ENCODE measurements at regions of chr6 and their contacts with region 1.

Region 1: GRCh38 chr6:129709769-129710449 is at the start of gene ARHGAP18:
- DNase-seq: peak; percentile 91 to 95
- ATAC-seq: peak; percentile 97 to 98 (median 98)
- H3K4me3 ChIP-seq: peak within 1 kb of the TSS; percentile 73
- H3K27ac ChIP-seq: peak within 1 kb of the TSS; percentile 85
- H3K4me1 ChIP-seq: peaks cover 25% of the 10 kb centered on the region
- H3K27me3 ChIP-seq: no peaks in the 10 kb centered on the region
- CTCF ChIP-seq: no peak
- total RNA-seq, gene ARHGAP18: 5.2 to 6.8 (median 5.5) TPM

Region 2: DNA sequence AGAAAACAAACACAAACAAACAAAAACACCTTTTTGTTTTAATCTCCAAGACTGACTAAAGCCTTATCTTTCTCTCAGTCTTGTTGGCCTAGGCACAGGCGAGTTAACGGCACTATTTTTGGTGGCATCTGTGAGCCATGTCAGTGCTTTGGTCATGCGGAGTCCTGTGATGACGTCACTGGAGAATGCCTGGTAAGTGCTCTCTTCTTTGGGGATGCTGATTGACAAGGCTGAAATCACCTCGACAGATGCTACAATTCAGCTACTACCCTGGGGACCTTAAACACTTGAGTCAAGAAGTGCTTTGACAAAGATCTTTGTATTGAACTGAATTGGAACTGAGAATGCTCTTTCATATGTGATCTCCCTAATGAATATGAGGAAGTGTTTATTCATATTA is 442.9 kb before region 1 on chr6:
- intact Hi-C with region 1: no loop called
- DNase-seq: no peak
- ATAC-seq: no peak
- H3K4me3 ChIP-seq: no peak overlapping the region
- H3K27ac ChIP-seq: no peak overlapping the region
- H3K4me1 ChIP-seq: no peaks in the 10 kb centered on the region
- H3K27me3 ChIP-seq: no peaks in the 10 kb centered on the region
- CTCF ChIP-seq: no peak

Region 3: GRCh38 chr6:129628101-129628815 is 81.7 kb before region 1 on chr6:
- intact Hi-C with region 1: loop called in 1 of 2 experiments (anchors 5 kb)
- DNase-seq: no peak
- ATAC-seq: peak in 1 of 4 donors; percentile 44
- H3K4me3 ChIP-seq: no peak overlapping the region
- H3K27ac ChIP-seq: no peak overlapping the region
- H3K4me1 ChIP-seq: peaks cover 20% of the 10 kb centered on the region
- H3K27me3 ChIP-seq: no peaks in the 10 kb centered on the region
- CTCF ChIP-seq: no peak

Region 4: GRCh38 chr6:129672881-129673643 is 36.8 kb before region 1 on chr6:
- intact Hi-C with region 1: loop called in 1 of 2 experiments (anchors 5 kb)
- DNase-seq: no peak
- ATAC-seq: peak in 2 of 4 donors; percentile 27 to 53
- H3K4me3 ChIP-seq: peak overlapping the region; percentile 17
- H3K27ac ChIP-seq: peak overlapping the region; percentile 58
- H3K4me1 ChIP-seq: peaks cover 48% of the 10 kb centered on the region
- H3K27me3 ChIP-seq: no peaks in the 10 kb centered on the region
- CTCF ChIP-seq: no peak

Region 5: DNA sequence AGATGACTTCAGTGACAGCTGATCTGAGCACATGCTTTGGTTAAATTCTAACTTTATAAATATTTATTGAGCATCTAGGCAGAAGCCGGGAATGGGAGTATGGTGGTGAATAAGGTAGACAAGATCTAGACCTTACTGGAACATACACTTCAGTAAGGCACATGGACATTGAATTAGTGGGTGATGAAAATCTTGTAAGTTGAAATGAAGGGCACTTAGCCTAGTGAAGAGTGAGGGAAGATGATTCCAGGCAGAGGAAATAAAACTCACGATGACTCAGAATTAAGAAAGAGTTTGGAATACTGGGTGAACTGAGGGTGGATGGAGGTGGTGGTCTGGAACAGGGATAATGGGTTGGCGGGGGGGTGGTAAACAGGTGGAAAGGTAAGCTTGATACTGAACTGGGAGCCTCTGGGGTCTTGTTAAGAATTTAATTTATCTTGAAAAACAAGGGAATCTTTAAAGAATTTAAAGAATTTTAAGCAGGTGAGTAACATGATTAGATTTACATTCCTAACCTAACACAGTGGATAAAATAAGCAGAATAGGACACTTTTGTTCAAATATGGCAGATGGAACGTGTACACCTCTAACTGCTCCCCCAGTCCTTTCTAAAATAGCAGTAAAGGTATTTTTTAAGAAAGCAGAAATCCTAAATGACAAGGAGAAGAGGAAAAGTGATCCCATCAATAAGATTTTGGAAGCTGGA is 75.3 kb after region 1 on chr6:
- intact Hi-C with region 1: no loop called
- DNase-seq: no peak
- ATAC-seq: no peak
- H3K4me3 ChIP-seq: no peak overlapping the region
- H3K27ac ChIP-seq: no peak overlapping the region
- H3K4me1 ChIP-seq: no peaks in the 10 kb centered on the region
- H3K27me3 ChIP-seq: no peaks in the 10 kb centered on the region
- CTCF ChIP-seq: no peak

Measured in psoas muscle (tissue), 8 donors.